ENCODE measurements at regions of chr5 and their contacts with region 1.

Region 1: GRCh38 chr5:140113699-140114263 is at the start of gene PURA:
- DNase-seq: peak; percentile 92
- ATAC-seq: peak; percentile 90
- H3K4me3 Mint-ChIP-seq: peak within 1 kb of the TSS; percentile 94
- H3K27ac Mint-ChIP-seq: peak within 1 kb of the TSS; percentile 92
- H3K4me1 Mint-ChIP-seq: peaks cover 72% of the 10 kb centered on the region
- H3K27me3 Mint-ChIP-seq: peaks cover 6% of the 10 kb centered on the region
- CTCF ChIP-seq: no peak
- total RNA-seq, gene PURA: 13.2 and 14.9 TPM in 2 replicates

Region 2: DNA sequence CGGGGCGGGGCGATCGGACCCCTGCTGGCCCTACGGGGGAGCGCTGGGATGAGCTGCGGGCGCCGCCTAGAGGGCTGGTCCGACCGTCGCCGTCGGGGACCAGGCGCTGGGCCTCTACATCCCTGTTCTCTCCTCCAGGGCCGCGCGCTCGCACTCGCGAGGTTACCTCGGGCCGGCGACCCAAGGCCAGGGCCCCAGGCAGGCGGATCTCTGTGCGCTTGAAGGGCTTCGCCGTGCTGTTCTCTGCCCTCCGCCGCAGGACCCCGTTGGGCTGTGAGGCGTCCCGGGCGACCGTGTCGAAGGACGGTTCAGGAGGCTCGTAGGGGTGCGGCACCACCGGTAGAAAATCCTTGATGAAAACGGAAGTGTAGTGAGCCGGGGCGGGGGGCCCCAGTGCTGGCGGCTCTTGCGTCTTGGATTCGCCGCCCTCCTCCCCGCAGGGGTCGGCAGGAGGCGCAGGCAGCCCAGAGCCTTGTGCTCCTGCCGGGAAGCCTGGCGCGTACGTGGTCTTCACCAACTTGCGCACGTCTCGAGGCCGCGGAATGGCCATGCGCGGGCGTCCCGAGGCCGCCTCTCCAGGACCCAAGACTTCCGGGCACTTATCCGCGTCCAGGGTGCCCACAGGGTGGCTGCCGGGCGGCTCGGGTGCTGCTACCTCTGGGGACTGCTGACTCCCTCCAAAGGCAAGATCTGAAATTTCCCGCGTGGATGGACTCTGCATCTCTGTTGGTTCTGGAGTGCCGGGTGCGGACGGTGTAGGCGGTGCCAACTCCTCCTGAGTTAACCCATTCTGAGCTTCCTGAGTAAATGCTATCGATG is 720.9 kb before region 1 on chr5:
- CTCF ChIA-PET with region 1: no interaction called
- POLR2A ChIA-PET with region 1: no interaction called
- intact Hi-C with region 1: loop called (anchors 5 kb)
- DNase-seq: peak; percentile 89
- ATAC-seq: peak; percentile 62
- H3K4me3 Mint-ChIP-seq: peak overlapping the region; percentile 94
- H3K27ac Mint-ChIP-seq: peak overlapping the region; percentile 86
- H3K4me1 Mint-ChIP-seq: peaks cover 39% of the 10 kb centered on the region
- H3K27me3 Mint-ChIP-seq: no peaks in the 10 kb centered on the region
- CTCF ChIP-seq: no peak

Region 3: GRCh38 chr5:139600336-139600949 is 513.3 kb before region 1 on chr5:
- CTCF ChIA-PET with region 1: no interaction called
- POLR2A ChIA-PET with region 1: no interaction called
- intact Hi-C with region 1: no loop called
- DNase-seq: no peak
- ATAC-seq: no peak
- H3K4me3 Mint-ChIP-seq: no peak overlapping the region
- H3K27ac Mint-ChIP-seq: no peak overlapping the region
- H3K4me1 Mint-ChIP-seq: peaks cover 32% of the 10 kb centered on the region
- H3K27me3 Mint-ChIP-seq: no peaks in the 10 kb centered on the region
- CTCF ChIP-seq: no peak

Region 4: DNA sequence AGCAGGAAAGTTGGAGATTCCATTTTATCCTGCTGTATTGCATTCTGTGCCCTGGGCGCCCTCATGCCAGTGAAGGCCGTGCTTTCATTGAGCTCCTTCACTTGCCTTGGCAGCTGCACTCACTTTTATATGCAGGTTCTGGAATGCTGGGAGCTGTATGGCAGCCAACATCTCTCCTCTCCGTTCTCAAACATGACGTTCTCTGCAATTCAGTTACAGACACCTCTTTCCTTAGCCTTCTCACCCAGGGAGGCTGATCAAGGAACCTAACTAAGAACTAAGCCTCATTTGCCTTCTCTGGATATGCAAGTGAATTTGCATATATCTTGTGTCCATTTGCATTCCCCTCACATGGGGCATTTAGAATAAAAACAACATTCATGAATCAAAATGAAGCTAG is 29.2 kb before region 1 on chr5:
- CTCF ChIA-PET with region 1: no interaction called
- POLR2A ChIA-PET with region 1: interaction called, 14 read pairs
- intact Hi-C with region 1: no loop called
- DNase-seq: no peak
- ATAC-seq: no peak
- H3K4me3 Mint-ChIP-seq: no peak overlapping the region
- H3K27ac Mint-ChIP-seq: no peak overlapping the region
- H3K4me1 Mint-ChIP-seq: no peaks in the 10 kb centered on the region
- H3K27me3 Mint-ChIP-seq: peaks cover 22% of the 10 kb centered on the region
- CTCF ChIP-seq: no peak

Region 5: GRCh38 chr5:140145818-140146522 is 32.2 kb after region 1 on chr5:
- CTCF ChIA-PET with region 1: interaction called, 59 read pairs
- POLR2A ChIA-PET with region 1: interaction called, 9 read pairs
- intact Hi-C with region 1: loop called (anchors 1 kb)
- DNase-seq: peak; percentile 62
- ATAC-seq: peak; percentile 77
- H3K4me3 Mint-ChIP-seq: peak overlapping the region; percentile 52
- H3K27ac Mint-ChIP-seq: no peak overlapping the region
- H3K4me1 Mint-ChIP-seq: peaks cover 26% of the 10 kb centered on the region
- H3K27me3 Mint-ChIP-seq: peaks cover 21% of the 10 kb centered on the region
- CTCF ChIP-seq: peak; percentile 28

Region 6: GRCh38 chr5:140174465-140175366 is 60.9 kb after region 1 on chr5 and contains the start of gene CYSTM1:
- CTCF ChIA-PET with region 1: no interaction called
- POLR2A ChIA-PET with region 1: interaction called, 5 read pairs
- intact Hi-C with region 1: loop called (anchors 1 kb)
- DNase-seq: peak; percentile 96
- ATAC-seq: peak; percentile 83
- H3K4me3 Mint-ChIP-seq: peak within 1 kb of the TSS; percentile 93
- H3K27ac Mint-ChIP-seq: peak within 1 kb of the TSS; percentile 89
- H3K4me1 Mint-ChIP-seq: peaks cover 15% of the 10 kb centered on the region
- H3K27me3 Mint-ChIP-seq: no peaks in the 10 kb centered on the region
- CTCF ChIP-seq: no peak
- total RNA-seq, gene CYSTM1: 20.1 and 23.3 TPM in 2 replicates

Region 7: DNA sequence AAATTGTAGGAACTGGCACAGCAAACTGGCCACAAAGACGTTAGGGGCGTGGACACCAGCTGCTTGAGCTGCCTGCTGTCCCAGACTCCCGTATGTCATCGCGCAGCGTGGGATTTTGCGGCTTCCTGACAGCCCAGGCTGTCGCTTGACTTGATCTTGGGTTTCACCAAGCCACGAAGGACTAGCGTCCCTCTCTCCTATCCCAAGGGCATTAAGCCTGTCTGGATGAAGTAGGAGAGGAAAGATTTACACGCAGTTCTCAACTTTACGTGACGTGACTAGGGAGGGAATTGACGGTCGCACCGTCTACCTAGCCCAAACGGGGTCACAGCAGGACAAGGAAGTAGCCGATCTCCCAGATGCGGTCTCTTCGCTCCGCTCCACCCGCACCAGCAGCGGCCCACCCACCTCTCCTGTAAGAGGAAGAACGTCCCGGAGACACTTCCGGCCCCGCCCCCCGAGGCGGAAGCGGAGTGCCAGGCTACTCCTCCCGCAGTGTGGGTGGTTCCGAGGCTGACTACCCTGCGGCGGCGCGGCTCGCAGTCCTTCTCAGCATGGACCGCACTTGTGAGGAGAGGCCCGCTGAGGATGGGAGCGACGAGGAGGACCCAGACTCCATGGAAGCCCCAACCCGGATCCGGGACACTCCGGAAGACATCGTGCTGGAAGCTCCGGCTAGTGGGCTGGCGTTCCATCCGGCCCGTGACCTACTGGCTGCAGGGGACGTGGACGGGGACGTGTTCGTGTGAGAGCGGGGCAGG is 550.8 kb after region 1 on chr5 and contains the start of gene WDR55:
- CTCF ChIA-PET with region 1: no interaction called
- POLR2A ChIA-PET with region 1: no interaction called
- intact Hi-C with region 1: loop called (anchors 10 kb)
- DNase-seq: peak; percentile 91
- ATAC-seq: peak; percentile 98
- H3K4me3 Mint-ChIP-seq: peak within 1 kb of the TSS; percentile 97
- H3K27ac Mint-ChIP-seq: peak within 1 kb of the TSS; percentile 95
- H3K4me1 Mint-ChIP-seq: peaks cover 30% of the 10 kb centered on the region
- H3K27me3 Mint-ChIP-seq: no peaks in the 10 kb centered on the region
- CTCF ChIP-seq: no peak
- total RNA-seq, gene WDR55: 33.8 and 36.9 TPM in 2 replicates

Measured in activated B cell treated with CpG ODN at 0.5 μM for 24 hours (primary cell).